Panc1 (cell line): ENCODE measurements at regions of chr6 and their contacts with region 1.

Region 1: GRCh38 chr6:10886691-10887535 is at the start of gene SYCP2L:
- DNase-seq: peak; percentile 85
- ATAC-seq: peak; percentile 94
- H3K4me3 ChIP-seq: peak within 1 kb of the TSS; percentile 66 to 87
- H3K27ac ChIP-seq: peak within 1 kb of the TSS; percentile 69
- H3K4me1 ChIP-seq: peaks cover 7% of the 10 kb centered on the region
- H3K27me3 ChIP-seq: no peaks in the 10 kb centered on the region
- CTCF ChIP-seq: peak; percentile 83
- total RNA-seq, gene SYCP2L: 2.4 TPM

Region 2: DNA sequence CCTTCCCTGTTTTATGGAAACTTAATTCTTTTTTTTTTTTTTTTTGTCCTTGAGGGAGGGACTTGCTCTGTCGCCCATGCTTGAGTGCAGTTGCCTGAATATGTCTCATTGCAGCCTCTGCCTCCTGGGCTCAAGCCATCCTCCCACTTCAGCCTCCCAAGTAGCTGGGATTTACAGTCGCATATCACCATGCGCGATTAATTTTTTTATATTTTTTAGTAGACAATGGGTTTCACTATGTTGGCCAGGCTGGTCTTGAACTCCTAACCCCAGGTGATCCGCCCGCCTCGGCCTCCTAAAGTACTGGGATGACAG is 163.4 kb before region 1 on chr6:
- CTCF ChIA-PET with region 1: no interaction called
- POLR2A ChIA-PET with region 1: no interaction called
- in situ Hi-C with region 1: no loop called
- intact Hi-C with region 1: no loop called
- DNase-seq: no peak
- ATAC-seq: no peak
- H3K4me3 ChIP-seq: peak overlapping the region; percentile 77 to 91
- H3K27ac ChIP-seq: peak overlapping the region; percentile 95
- H3K4me1 ChIP-seq: peaks cover 18% of the 10 kb centered on the region
- H3K27me3 ChIP-seq: no peaks in the 10 kb centered on the region
- CTCF ChIP-seq: no peak

Region 3: DNA sequence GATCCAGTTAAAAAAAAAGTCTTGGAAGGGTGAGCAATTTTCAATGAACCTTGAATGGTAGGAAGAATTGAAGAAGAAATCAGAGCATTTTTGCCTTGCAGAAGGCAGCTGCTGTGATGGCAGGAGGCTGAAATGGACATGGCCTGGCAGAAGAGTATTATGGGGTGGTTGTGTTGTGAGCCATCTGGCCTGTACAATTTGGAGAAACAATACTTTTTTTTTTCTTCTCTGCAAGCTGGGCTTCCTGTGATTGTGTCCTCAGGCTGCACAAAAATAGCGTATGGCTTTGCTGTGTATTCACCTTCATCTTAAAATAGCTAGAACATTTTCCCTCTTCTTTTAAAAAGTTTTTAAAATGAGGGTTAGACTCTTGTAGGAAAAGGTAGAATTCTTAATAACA is 21.3 kb after region 1 on chr6:
- CTCF ChIA-PET with region 1: no interaction called
- POLR2A ChIA-PET with region 1: interaction called, 17 read pairs
- in situ Hi-C with region 1: no loop called
- intact Hi-C with region 1: no loop called
- DNase-seq: no peak
- ATAC-seq: no peak
- H3K4me3 ChIP-seq: no peak overlapping the region
- H3K27ac ChIP-seq: no peak overlapping the region
- H3K4me1 ChIP-seq: no peaks in the 10 kb centered on the region
- H3K27me3 ChIP-seq: no peaks in the 10 kb centered on the region
- CTCF ChIP-seq: no peak